ENCODE measurements at regions of chr14 and their contacts with region 1.

Region 1: DNA sequence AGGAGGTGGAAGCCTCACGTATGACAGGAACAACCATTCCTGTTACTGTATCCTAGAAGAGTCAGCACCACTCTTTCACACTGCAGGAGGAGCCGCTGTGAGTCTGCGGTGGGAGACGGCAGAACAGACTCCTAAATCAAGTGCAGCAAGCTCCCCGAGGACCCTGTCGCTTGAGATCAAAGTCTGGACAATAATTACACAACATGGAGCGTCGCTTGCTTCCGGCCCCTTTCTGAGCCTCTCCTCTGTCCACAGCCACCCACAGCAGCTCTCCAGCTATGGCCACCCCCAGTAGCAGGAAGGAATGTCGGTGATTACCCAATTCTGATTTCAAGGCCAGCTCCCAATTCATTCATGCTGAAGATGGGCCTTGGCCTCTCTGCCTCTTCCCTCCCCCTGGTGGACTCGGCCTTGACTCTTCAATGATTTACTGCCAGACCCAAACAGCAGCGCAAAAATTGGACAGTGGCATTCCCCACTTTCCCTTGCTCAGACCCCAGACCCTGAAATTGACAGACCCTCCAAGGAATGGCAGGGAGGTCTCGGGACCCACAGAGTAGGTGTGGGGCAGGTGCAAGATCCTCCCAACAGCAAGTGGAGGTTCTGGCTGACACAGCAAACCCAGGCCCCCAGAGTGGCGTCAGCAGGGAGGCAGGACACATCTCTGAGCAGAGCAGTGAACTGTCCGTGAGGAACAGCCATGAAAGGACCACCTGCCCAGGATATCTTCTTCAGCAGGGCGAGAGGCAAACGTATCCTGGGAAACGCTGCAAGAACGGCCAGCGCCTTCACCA is 272.7 kb upstream of the DIO3 start:
- DNase-seq: peak; percentile 99
- ATAC-seq: peak; percentile 92
- H3K4me3 ChIP-seq: peak overlapping the region; percentile 48 to 71 (median 55)
- H3K27ac ChIP-seq: peak overlapping the region; percentile 99
- H3K4me1 ChIP-seq: peaks cover 78% of the 10 kb centered on the region
- H3K27me3 ChIP-seq: no peaks in the 10 kb centered on the region
- CTCF ChIP-seq: peak; percentile 47
- EP300 ChIP-seq: peak; percentile 96 to 99
- POLR2A ChIP-seq: peak; percentile 71 to 85
- RAD21 ChIP-seq: peak; percentile 71

Region 2: GRCh38 chr14:101185073-101185835 is 103.4 kb before region 1 on chr14:
- CTCF ChIA-PET with region 1: no interaction called
- POLR2A ChIA-PET with region 1: no interaction called
- in situ Hi-C with region 1: no loop called
- intact Hi-C with region 1: no loop called
- DNase-seq: no peak
- ATAC-seq: no peak
- H3K4me3 ChIP-seq: no peak overlapping the region
- H3K27ac ChIP-seq: no peak overlapping the region
- H3K4me1 ChIP-seq: no peaks in the 10 kb centered on the region
- H3K27me3 ChIP-seq: peaks cover 0 to 35% of the 10 kb centered on the region in 2 experiments; a peak in 3 of 5 replicates
- CTCF ChIP-seq: no peak
- EP300 ChIP-seq: no peak
- POLR2A ChIP-seq: no peak
- RAD21 ChIP-seq: no peak

Region 3: DNA sequence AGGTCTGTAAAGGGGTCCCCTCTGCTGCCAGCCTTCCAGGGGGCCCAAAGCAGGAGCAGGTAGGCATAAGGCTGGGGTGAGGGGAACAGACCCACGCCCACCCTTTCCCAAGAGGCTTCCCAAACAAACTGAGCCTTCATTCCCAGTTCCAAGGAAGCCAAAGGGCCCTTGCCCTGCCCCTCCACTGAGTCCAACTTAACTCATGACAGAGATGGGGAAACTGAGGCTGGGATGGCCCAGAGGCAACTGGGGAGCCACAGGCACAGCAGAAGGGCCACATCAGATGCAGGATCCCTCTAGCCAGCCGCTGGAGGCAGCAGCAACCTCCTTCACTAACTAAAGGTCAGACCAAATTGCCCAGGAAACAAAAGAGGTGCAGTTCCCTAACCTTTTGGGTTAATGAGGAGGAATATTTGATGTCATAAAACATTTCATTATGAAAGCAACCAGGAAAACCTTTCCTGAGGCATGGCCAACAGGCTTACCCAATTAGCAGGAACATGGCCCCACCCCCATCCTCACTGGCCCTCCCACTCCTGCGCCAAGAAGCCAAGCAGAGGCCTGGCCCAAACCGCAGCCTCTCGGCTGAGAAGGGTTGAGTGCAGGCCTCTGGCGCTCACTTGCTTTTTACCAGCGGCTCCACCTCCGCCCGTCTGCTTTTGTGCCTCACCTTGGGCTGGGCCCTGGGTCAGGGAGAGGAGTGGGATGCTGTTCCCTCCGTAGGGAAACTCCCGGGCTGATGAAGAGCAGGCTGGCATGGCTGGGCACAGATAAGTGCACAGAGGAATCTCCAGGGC is 91.6 kb before region 1 on chr14:
- CTCF ChIA-PET with region 1: no interaction called
- POLR2A ChIA-PET with region 1: no interaction called
- in situ Hi-C with region 1: no loop called
- intact Hi-C with region 1: no loop called
- DNase-seq: no peak
- ATAC-seq: no peak
- H3K4me3 ChIP-seq: no peak overlapping the region
- H3K27ac ChIP-seq: no peak overlapping the region
- H3K4me1 ChIP-seq: no peaks in the 10 kb centered on the region
- H3K27me3 ChIP-seq: peaks cover 11 to 49% of the 10 kb centered on the region in 2 experiments
- CTCF ChIP-seq: no peak
- EP300 ChIP-seq: no peak
- POLR2A ChIP-seq: no peak
- RAD21 ChIP-seq: no peak

Region 4: GRCh38 chr14:101235335-101236103 is 53.1 kb before region 1 on chr14:
- CTCF ChIA-PET with region 1: interaction called, 3 read pairs
- POLR2A ChIA-PET with region 1: interaction called, 76 read pairs
- in situ Hi-C with region 1: no loop called
- intact Hi-C with region 1: loop called (anchors 1 kb)
- DNase-seq: peak; percentile 47
- ATAC-seq: peak; percentile 91
- H3K4me3 ChIP-seq: peak overlapping the region in 1 of 3 experiments; percentile 15; a peak in 1 of 6 replicates
- H3K27ac ChIP-seq: no peak overlapping the region
- H3K4me1 ChIP-seq: peaks cover 77% of the 10 kb centered on the region
- H3K27me3 ChIP-seq: peaks cover 0 to 10% of the 10 kb centered on the region in 2 experiments; a peak in 2 of 5 replicates
- CTCF ChIP-seq: peak; percentile 97
- EP300 ChIP-seq: no peak
- POLR2A ChIP-seq: no peak
- RAD21 ChIP-seq: peak; percentile 96

Region 5: GRCh38 chr14:101276309-101277091 is 12.1 kb before region 1 on chr14:
- CTCF ChIA-PET with region 1: no interaction called
- POLR2A ChIA-PET with region 1: interaction called, 11 read pairs
- in situ Hi-C with region 1: no loop called
- intact Hi-C with region 1: no loop called
- DNase-seq: no peak
- ATAC-seq: no peak
- H3K4me3 ChIP-seq: no peak overlapping the region
- H3K27ac ChIP-seq: no peak overlapping the region
- H3K4me1 ChIP-seq: peaks cover 24% of the 10 kb centered on the region
- H3K27me3 ChIP-seq: no peaks in the 10 kb centered on the region
- CTCF ChIP-seq: no peak
- EP300 ChIP-seq: no peak
- POLR2A ChIP-seq: no peak
- RAD21 ChIP-seq: no peak

Region 6: GRCh38 chr14:101301011-101301410 is 12.4 kb after region 1 on chr14:
- CTCF ChIA-PET with region 1: no interaction called
- POLR2A ChIA-PET with region 1: interaction called, 23 read pairs
- in situ Hi-C with region 1: no loop called
- intact Hi-C with region 1: no loop called
- DNase-seq: no peak
- ATAC-seq: no peak
- H3K4me3 ChIP-seq: no peak overlapping the region
- H3K27ac ChIP-seq: no peak overlapping the region
- H3K4me1 ChIP-seq: peaks cover 8% of the 10 kb centered on the region; the same call in 1 of the 2 replicates
- H3K27me3 ChIP-seq: no peaks in the 10 kb centered on the region; a peak in 1 of 5 replicates
- CTCF ChIP-seq: no peak
- EP300 ChIP-seq: no peak
- POLR2A ChIP-seq: no peak
- RAD21 ChIP-seq: no peak

Region 7: DNA sequence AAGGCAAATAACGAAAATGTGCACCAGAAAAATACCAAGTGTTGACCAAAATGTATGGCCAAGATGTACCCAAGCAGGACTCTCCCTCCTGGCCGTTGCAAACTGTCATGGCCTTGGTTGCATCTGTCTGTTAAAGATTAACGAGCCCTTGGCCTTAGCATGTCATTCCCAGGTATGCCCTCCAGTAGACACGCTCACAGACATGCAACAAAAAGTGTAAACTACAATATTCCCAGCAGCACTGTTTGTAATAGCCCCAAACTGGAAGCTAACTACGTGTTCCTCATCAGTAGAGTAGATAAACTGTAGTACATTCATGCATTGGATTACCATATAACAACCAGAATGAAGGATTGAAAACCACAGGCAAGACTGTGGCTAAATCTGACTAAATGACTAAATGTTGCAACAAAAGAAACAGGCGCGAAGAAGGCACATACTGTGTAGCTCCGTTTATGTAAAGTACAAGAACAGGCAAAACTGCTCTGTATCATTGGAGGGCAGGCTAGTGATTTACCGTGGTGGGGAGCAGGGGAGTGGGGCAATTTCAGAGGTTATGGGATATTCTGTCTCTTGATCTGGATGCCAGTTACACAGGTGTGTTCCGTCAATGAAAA is 39.9 kb after region 1 on chr14:
- CTCF ChIA-PET with region 1: no interaction called
- POLR2A ChIA-PET with region 1: interaction called, 51 read pairs
- in situ Hi-C with region 1: no loop called
- intact Hi-C with region 1: no loop called
- DNase-seq: peak; percentile 78
- ATAC-seq: peak; percentile 90
- H3K4me3 ChIP-seq: peak overlapping the region in 1 of 3 experiments; percentile 9; a peak in 1 of 6 replicates
- H3K27ac ChIP-seq: peak overlapping the region; percentile 52
- H3K4me1 ChIP-seq: peaks cover 87% of the 10 kb centered on the region
- H3K27me3 ChIP-seq: no peaks in the 10 kb centered on the region; a peak in 1 of 5 replicates
- CTCF ChIP-seq: 0 out of 2 replicates have a peak, but pooled peaks have one; percentile 5
- EP300 ChIP-seq: peak in 1 of 2 experiments; percentile 59; a peak in 1 of 4 replicates
- POLR2A ChIP-seq: peak in 1 of 2 experiments; percentile 30; a peak in 1 of 4 replicates
- RAD21 ChIP-seq: no peak

Region 8: DNA sequence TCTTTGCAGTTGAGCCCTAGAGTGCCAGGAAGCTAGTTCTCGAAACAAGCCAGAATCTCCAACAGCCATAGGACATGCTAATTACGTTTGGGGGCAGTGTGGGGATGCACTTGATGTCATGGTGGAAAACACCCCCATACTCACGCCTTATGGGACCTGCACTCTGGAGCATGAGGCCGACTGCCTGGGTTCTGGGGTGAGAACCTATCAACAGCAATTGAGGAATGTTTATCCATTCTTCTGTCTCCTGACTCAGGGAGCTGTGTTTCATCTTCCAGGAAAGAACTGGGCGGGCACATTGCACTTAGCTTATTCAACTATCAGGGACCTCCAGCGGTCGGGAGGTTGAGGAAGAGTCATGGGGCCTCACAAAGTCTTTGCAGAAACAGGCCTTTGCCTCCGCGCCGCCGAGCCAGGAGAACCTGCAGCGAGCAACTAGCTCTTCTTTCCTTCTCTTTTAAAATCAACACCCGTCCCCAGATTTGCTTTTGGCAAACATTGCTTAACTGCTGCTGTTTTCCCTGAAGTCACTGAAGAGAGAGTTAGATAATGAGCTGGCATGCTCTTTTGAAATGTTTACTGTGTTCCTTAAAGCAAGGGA is 46.5 kb after region 1 on chr14:
- CTCF ChIA-PET with region 1: no interaction called
- POLR2A ChIA-PET with region 1: interaction called, 70 read pairs
- in situ Hi-C with region 1: no loop called
- intact Hi-C with region 1: loop called (anchors 2 kb)
- DNase-seq: peak; percentile 87
- ATAC-seq: peak; percentile 75
- H3K4me3 ChIP-seq: peak overlapping the region; percentile 19 to 56 (median 26); a peak in 5 of 6 replicates
- H3K27ac ChIP-seq: peak overlapping the region; percentile 77
- H3K4me1 ChIP-seq: peaks cover 71% of the 10 kb centered on the region
- H3K27me3 ChIP-seq: 0 out of 5 replicates have a peak, but pooled peaks cover 0 to under 1% of the 10 kb centered on the region in 2 experiments
- CTCF ChIP-seq: no peak
- EP300 ChIP-seq: peak in 1 of 2 experiments; percentile 91; a peak in 2 of 4 replicates
- POLR2A ChIP-seq: no peak; a peak in 1 of 4 replicates
- RAD21 ChIP-seq: no peak

Region 9: GRCh38 chr14:101359221-101360053 is 70.8 kb after region 1 on chr14:
- CTCF ChIA-PET with region 1: no interaction called
- POLR2A ChIA-PET with region 1: no interaction called
- in situ Hi-C with region 1: no loop called
- intact Hi-C with region 1: no loop called
- DNase-seq: no peak
- ATAC-seq: no peak
- H3K4me3 ChIP-seq: no peak overlapping the region
- H3K27ac ChIP-seq: no peak overlapping the region
- H3K4me1 ChIP-seq: peaks cover 28% of the 10 kb centered on the region
- H3K27me3 ChIP-seq: peaks cover 6 to 61% of the 10 kb centered on the region in 2 experiments; a peak in 4 of 5 replicates
- CTCF ChIP-seq: no peak
- EP300 ChIP-seq: no peak
- POLR2A ChIP-seq: no peak
- RAD21 ChIP-seq: no peak

Measured in HepG2 (cell line).